Panc1 (cell line): ENCODE measurements at regions of chr6 and their contacts with region 1.

Region 1: DNA sequence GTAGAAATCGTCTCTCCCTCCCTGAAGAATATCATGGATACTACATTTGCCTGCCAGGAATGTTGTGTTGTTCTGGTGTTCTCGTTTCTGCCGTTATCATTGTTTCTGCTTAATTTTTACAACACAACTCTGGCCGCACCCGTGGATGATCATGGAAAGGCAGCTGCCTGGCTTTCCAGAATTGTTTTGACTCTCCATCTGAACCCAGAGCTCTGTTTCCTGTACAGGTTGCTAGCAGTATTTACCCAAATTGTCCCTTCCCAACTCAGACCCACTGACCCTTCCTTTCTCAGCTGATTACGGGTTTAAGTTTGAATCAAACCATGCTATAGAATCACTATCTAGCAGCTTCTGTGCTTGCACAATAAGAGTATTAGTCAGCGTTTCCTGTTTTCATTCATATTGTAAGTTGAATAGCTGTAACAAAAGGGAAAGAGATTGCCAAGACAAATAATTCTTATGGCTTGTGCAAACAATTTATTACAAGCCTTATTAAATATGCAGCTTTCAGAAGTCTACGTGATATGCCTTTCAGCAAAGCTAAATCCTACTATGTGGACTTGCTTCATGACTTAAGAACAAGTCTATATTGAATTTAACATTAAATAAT is 139.0 kb downstream of the MTHFD1L start:
- DNase-seq: peak; percentile 87
- ATAC-seq: peak; percentile 91
- H3K4me3 ChIP-seq: no peak overlapping the region
- H3K27ac ChIP-seq: peak overlapping the region; percentile 77
- H3K4me1 ChIP-seq: peaks cover 21% of the 10 kb centered on the region
- H3K27me3 ChIP-seq: no peaks in the 10 kb centered on the region
- CTCF ChIP-seq: no peak

Region 2: GRCh38 chr6:151075527-151075926 is 71.0 kb after region 1 on chr6:
- CTCF ChIA-PET with region 1: no interaction called
- POLR2A ChIA-PET with region 1: interaction called, 12 read pairs
- in situ Hi-C with region 1: no loop called
- intact Hi-C with region 1: no loop called
- DNase-seq: no peak
- ATAC-seq: no peak
- H3K4me3 ChIP-seq: no peak overlapping the region
- H3K27ac ChIP-seq: no peak overlapping the region
- H3K4me1 ChIP-seq: peaks cover 7% of the 10 kb centered on the region
- H3K27me3 ChIP-seq: no peaks in the 10 kb centered on the region
- CTCF ChIP-seq: no peak